Pancreas (tissue), 10 donors: ENCODE measurements at regions of chr7 and their contacts with region 1.

Region 1: GRCh38 chr7:142196066-142196840 is 61.6 kb downstream of the PRSS58 start:
- DNase-seq: no peak
- ATAC-seq: no peak
- H3K4me3 ChIP-seq: no peak overlapping the region
- H3K27ac ChIP-seq: no peak overlapping the region
- H3K4me1 ChIP-seq: no peaks in the 10 kb centered on the region
- H3K27me3 ChIP-seq: no peaks in the 10 kb centered on the region
- CTCF ChIP-seq: no peak

Region 2: GRCh38 chr7:141975806-141976523 is 220.3 kb before region 1 on chr7:
- intact Hi-C with region 1: loop called in 1 of 3 experiments (anchors 10 kb)
- DNase-seq: peak; percentile 69 to 96 (median 84)
- ATAC-seq: peak; percentile 94 to 99 (median 98)
- H3K4me3 ChIP-seq: peak overlapping the region in 3 of 4 donors; percentile 18 to 46 (median 32)
- H3K27ac ChIP-seq: peak overlapping the region in 1 of 4 donors; percentile 20
- H3K4me1 ChIP-seq: peaks cover 0 to 4% (median 0%) of the 10 kb centered on the region in 3 donors
- H3K27me3 ChIP-seq: no peaks in the 10 kb centered on the region
- CTCF ChIP-seq: peak; percentile 78 to 87 (median 80)